ENCODE measurements at regions of chr19 and their contacts with region 1.

Region 1: GRCh38 chr19:913080-913748 is at the start of gene R3HDM4:
- DNase-seq: peak; percentile 61 to 92 (median 85)
- ATAC-seq: peak; percentile 46
- H3K4me3 ChIP-seq: peak within 1 kb of the TSS; percentile 83 to 94
- H3K4me3 Mint-ChIP-seq: peak within 1 kb of the TSS; percentile 83
- H3K27ac ChIP-seq: peak within 1 kb of the TSS; percentile 85 to 98
- H3K27ac Mint-ChIP-seq: peak within 1 kb of the TSS; percentile 95
- H3K4me1 ChIP-seq: peaks cover 46% of the 10 kb centered on the region
- H3K4me1 Mint-ChIP-seq: peaks cover 32% of the 10 kb centered on the region
- H3K27me3 ChIP-seq: peaks cover 0 to 21% of the 10 kb centered on the region in 2 experiments
- H3K27me3 Mint-ChIP-seq: peaks cover 3% of the 10 kb centered on the region
- CTCF ChIP-seq: no peak
- total RNA-seq, gene R3HDM4: 242 to 261 TPM

Region 2: DNA sequence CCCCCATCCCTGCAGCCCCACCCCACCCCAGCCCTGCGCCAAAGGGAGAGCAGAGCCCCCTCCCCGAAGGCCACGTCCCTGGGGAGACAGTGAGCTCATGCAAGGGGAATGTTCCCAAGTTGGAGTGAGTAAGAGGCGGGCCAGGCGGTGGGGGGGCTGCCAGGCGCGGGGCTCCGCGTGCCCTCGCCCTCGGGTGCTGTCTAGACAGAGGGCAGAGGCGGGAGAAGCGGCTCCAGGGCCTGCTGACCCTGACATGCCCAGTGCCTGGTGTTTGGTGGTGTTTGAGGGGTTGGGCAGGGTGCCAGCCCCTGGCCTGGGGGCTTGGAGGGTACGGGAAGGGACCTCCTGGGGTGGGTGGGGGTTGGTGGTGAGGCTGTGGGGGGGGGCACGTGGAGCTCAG is 236.0 kb before region 1 on chr19:
- CTCF ChIA-PET with region 1: no interaction called
- POLR2A ChIA-PET with region 1: no interaction called
- intact Hi-C with region 1: no loop called
- DNase-seq: peak in 1 of 9 experiments; percentile 17
- ATAC-seq: no peak
- H3K4me3 ChIP-seq: no peak overlapping the region
- H3K4me3 Mint-ChIP-seq: no peak overlapping the region
- H3K27ac ChIP-seq: no peak overlapping the region
- H3K27ac Mint-ChIP-seq: no peak overlapping the region
- H3K4me1 ChIP-seq: peaks cover 20% of the 10 kb centered on the region
- H3K4me1 Mint-ChIP-seq: peaks cover 10% of the 10 kb centered on the region
- H3K27me3 ChIP-seq: peaks cover 0 to 24% of the 10 kb centered on the region in 2 experiments
- H3K27me3 Mint-ChIP-seq: peaks cover 18% of the 10 kb centered on the region
- CTCF ChIP-seq: no peak

Region 3: GRCh38 chr19:771332-771785 is 141.9 kb before region 1 on chr19:
- CTCF ChIA-PET with region 1: interaction called, 3 read pairs
- POLR2A ChIA-PET with region 1: no interaction called
- intact Hi-C with region 1: loop called in 1 of 2 experiments (anchors 2 kb)
- DNase-seq: peak in 2 of 9 experiments; percentile 47 to 56
- ATAC-seq: no peak
- H3K4me3 ChIP-seq: no peak overlapping the region
- H3K4me3 Mint-ChIP-seq: no peak overlapping the region
- H3K27ac ChIP-seq: no peak overlapping the region
- H3K27ac Mint-ChIP-seq: no peak overlapping the region
- H3K4me1 ChIP-seq: no peaks in the 10 kb centered on the region
- H3K4me1 Mint-ChIP-seq: peaks cover 2% of the 10 kb centered on the region
- H3K27me3 ChIP-seq: peaks cover 0 to 4% of the 10 kb centered on the region in 2 experiments
- H3K27me3 Mint-ChIP-seq: peaks cover 6% of the 10 kb centered on the region
- CTCF ChIP-seq: no peak

Region 4: GRCh38 chr19:872266-872951 is 40.8 kb before region 1 on chr19:
- CTCF ChIA-PET with region 1: interaction called, 3 read pairs
- POLR2A ChIA-PET with region 1: interaction called, 4 read pairs
- intact Hi-C with region 1: loop called (anchors 2 kb)
- DNase-seq: peak; percentile 72 to 95 (median 87)
- ATAC-seq: peak; percentile 80
- H3K4me3 ChIP-seq: peak overlapping the region; percentile 33 to 50
- H3K4me3 Mint-ChIP-seq: peak overlapping the region; percentile 78
- H3K27ac ChIP-seq: peak overlapping the region; percentile 48 to 69
- H3K27ac Mint-ChIP-seq: peak overlapping the region; percentile 89
- H3K4me1 ChIP-seq: peaks cover 15% of the 10 kb centered on the region
- H3K4me1 Mint-ChIP-seq: peaks cover 11% of the 10 kb centered on the region
- H3K27me3 ChIP-seq: no peaks in the 10 kb centered on the region
- H3K27me3 Mint-ChIP-seq: no peaks in the 10 kb centered on the region
- CTCF ChIP-seq: no peak

Region 5: GRCh38 chr19:892243-893050 is 20.8 kb before region 1 on chr19:
- CTCF ChIA-PET with region 1: interaction called, 15 read pairs
- POLR2A ChIA-PET with region 1: interaction called, 107 read pairs
- intact Hi-C with region 1: loop called (anchors 1 kb)
- DNase-seq: peak in 5 of 9 experiments; percentile 37 to 54 (median 48)
- ATAC-seq: peak; percentile 35
- H3K4me3 ChIP-seq: peak overlapping the region; percentile 62 to 67
- H3K4me3 Mint-ChIP-seq: peak overlapping the region; percentile 95
- H3K27ac ChIP-seq: peak overlapping the region; percentile 65 to 98
- H3K27ac Mint-ChIP-seq: peak overlapping the region; percentile 100
- H3K4me1 ChIP-seq: peaks cover 11% of the 10 kb centered on the region
- H3K4me1 Mint-ChIP-seq: peaks cover 36% of the 10 kb centered on the region
- H3K27me3 ChIP-seq: no peaks in the 10 kb centered on the region
- H3K27me3 Mint-ChIP-seq: no peaks in the 10 kb centered on the region
- CTCF ChIP-seq: no peak

Region 6: DNA sequence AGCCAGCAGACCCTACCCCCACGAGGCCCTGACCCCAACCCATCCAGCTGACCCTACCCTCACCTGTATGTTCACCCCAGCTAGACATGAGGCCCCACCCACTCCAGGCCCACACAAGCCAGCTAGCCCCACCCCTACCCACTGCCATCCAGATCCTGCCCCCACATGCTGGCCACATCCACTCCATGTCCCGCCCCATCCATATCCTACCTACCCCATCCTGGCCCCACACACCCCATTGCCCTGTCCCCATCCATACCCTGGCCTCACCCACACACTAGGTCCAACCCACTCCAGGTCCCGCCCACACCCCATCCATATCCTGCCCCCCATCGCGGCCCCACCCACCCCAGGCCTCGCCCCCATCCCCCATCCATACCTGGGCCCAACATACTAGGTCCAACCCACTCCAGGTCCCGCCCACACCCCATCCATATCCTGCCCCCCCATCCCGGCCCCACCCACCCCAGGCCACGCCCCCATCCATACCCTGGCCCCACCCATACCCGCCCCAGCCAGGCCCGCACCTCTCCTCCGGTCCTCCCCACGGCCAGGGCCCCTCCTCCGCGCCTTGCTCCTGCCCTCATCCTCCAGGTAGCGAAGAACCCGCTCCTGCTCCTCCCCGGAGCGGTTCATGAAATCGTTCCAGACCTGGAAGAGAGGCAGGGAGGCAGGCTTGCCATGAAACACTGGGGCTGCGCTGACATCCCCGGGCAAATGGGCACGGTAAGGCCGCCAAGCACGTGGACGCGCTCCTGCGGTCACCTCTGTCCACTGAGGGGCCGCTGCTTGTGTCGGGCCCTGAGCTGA is 12.7 kb before region 1 on chr19:
- CTCF ChIA-PET with region 1: no interaction called
- POLR2A ChIA-PET with region 1: interaction called, 107 read pairs
- intact Hi-C with region 1: loop called in 1 of 2 experiments (anchors 1 kb)
- DNase-seq: peak in 4 of 9 experiments; percentile 36 to 66 (median 59)
- ATAC-seq: peak; percentile 72
- H3K4me3 ChIP-seq: no peak overlapping the region
- H3K4me3 Mint-ChIP-seq: no peak overlapping the region
- H3K27ac ChIP-seq: no peak overlapping the region
- H3K27ac Mint-ChIP-seq: no peak overlapping the region
- H3K4me1 ChIP-seq: peaks cover 29% of the 10 kb centered on the region
- H3K4me1 Mint-ChIP-seq: peaks cover 24% of the 10 kb centered on the region
- H3K27me3 ChIP-seq: no peaks in the 10 kb centered on the region
- H3K27me3 Mint-ChIP-seq: no peaks in the 10 kb centered on the region
- CTCF ChIP-seq: no peak

Measured in CD8-positive, alpha-beta T cell (primary cell).